ENCODE measurements at regions of chr19 and their contacts with region 1.

Region 1: GRCh38 chr19:39792999-39793546 is 14.4 kb downstream of the LEUTX start:
- DNase-seq: peak; percentile 67
- ATAC-seq: peak; percentile 97
- H3K4me3 Mint-ChIP-seq: peak overlapping the region; percentile 78
- H3K27ac Mint-ChIP-seq: no peak overlapping the region
- H3K4me1 Mint-ChIP-seq: peaks cover 7% of the 10 kb centered on the region
- H3K27me3 Mint-ChIP-seq: peaks cover 3% of the 10 kb centered on the region
- CTCF ChIP-seq: peak; percentile 49

Region 2: DNA sequence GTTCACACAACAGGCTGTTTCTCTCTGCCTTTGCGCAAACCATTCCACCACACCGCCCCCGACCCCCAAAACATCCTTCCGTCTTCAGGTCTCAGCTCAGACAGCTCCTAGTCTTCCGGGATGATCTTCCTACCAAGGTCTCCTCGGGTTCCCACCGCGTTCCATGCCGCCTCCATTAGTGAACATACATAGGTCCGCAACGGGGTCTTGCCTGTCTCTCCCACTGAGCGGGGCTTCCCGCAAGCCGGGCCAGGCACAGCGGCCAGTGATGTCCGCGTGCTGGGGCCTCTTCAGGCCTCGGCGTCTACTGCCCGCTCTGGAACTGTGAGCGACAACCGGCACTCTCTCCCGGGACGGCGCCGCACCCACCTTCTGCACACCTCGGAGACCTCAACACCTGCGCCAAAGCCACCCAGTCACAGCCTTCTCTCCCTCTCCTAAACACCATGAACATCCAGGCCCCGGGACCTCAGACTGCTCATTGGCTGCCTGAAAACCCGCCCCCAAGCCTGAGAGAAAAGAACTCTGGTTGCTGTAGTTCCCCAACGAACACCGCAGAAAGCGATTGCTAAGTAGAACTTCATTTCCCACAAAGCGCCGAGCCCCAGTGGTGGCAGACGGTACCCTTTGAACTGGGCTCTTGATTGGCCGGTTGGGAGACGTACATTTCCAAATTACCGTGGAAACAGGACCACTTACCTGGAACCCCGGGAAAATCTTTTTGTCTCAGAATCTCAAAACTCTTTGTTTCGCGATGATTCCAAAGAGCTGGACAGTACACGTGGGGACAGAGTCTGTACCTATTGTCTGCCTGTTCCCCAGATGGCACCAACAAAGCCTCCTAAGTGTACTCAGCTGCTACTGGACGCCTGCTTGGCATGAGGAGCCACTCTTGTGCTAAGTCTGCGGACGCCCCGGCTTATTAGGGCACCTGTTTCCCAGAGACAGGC is 31.3 kb after region 1 on chr19:
- CTCF ChIA-PET with region 1: interaction called, 5 read pairs
- POLR2A ChIA-PET with region 1: no interaction called
- intact Hi-C with region 1: loop called (anchors 1 kb)
- DNase-seq: peak; percentile 67
- ATAC-seq: peak; percentile 98
- H3K4me3 Mint-ChIP-seq: no peak overlapping the region
- H3K27ac Mint-ChIP-seq: no peak overlapping the region
- H3K4me1 Mint-ChIP-seq: peaks cover 12% of the 10 kb centered on the region
- H3K27me3 Mint-ChIP-seq: no peaks in the 10 kb centered on the region
- CTCF ChIP-seq: no peak

Measured in activated B cell treated with CpG ODN at 0.5 μM for 24 hours (primary cell).